Activated CD4-positive, alpha-beta T cell treated with anti-CD3 and anti-CD28 coated beads for 36 hours (primary cell): ENCODE measurements at regions of chr19 and their contacts with region 1.

Region 1: GRCh38 chr19:57240311-57241090 is at the start of gene ZNF805:
- DNase-seq: peak; percentile 97
- ATAC-seq: peak; percentile 95
- H3K4me3 Mint-ChIP-seq: peak within 1 kb of the TSS; percentile 80
- H3K27ac Mint-ChIP-seq: peak within 1 kb of the TSS; percentile 92
- H3K4me1 Mint-ChIP-seq: peaks cover 23% of the 10 kb centered on the region
- H3K27me3 Mint-ChIP-seq: no peaks in the 10 kb centered on the region
- total RNA-seq, gene ZNF805: 6.4 to 7.1 TPM

Region 2: DNA sequence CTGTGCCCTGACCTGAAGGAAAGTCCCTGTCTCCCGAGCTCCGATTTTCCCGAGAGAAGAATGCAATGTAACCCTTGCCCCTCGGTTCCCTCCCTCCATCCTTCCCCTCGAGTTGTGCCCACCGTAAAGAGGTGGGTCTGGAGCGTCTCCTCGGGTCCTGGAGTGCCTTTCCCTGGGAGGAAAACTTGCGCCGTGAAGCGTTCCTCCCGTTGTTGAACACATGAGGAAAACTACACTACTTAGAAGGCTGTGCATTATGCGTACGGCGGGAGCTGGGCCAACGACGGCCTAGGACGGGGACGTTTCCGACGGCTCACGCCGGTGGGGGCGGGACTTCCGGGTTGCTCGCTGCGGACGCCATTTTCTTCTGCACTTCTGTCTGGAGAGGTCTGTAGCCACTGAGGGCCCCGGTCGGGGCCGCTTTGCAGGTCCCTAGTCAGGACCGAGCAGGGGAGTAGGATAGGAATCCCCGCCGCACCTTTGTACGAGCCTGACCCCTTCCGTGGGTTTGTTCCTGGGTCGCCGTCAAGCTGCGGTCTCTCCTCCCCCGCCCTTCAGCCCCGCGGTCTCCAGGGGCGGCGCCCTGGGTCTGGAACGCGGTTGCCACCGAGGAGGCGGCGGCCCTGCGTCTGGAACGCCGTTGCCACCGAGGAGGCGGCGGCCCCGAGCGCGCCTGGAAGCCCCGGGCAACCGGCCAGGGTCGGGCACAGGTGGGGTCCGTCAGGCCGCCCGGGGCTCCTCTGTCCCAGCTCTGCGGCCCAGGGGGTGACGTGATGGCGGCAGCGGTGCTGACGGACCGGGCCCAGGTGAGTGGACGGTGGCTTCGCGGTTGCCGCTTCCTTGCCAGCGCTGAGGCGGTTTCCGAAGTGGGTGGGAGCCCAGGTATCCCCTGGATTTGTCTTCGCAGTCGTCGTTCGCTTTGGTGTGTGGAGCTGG is 49.1 kb before region 1 on chr19 and contains the start of gene ZNF264:
- CTCF ChIA-PET with region 1: no interaction called
- POLR2A ChIA-PET with region 1: no interaction called
- intact Hi-C with region 1: loop called in 1 of 2 experiments (anchors 1 kb)
- DNase-seq: peak; percentile 93
- ATAC-seq: peak; percentile 96
- H3K4me3 Mint-ChIP-seq: peak within 1 kb of the TSS; percentile 93
- H3K27ac Mint-ChIP-seq: peak within 1 kb of the TSS; percentile 95
- H3K4me1 Mint-ChIP-seq: peaks cover 28% of the 10 kb centered on the region
- H3K27me3 Mint-ChIP-seq: peaks cover 4% of the 10 kb centered on the region
- total RNA-seq, gene ZNF264: 14.8 to 21.1 TPM

Region 3: GRCh38 chr19:57320180-57321084 is 79.9 kb after region 1 on chr19 and contains the start of gene ZNF543:
- CTCF ChIA-PET with region 1: no interaction called
- POLR2A ChIA-PET with region 1: interaction called, 3 read pairs
- intact Hi-C with region 1: loop called (anchors 1 kb)
- DNase-seq: peak; percentile 97
- ATAC-seq: peak; percentile 98
- H3K4me3 Mint-ChIP-seq: peak within 1 kb of the TSS; percentile 94
- H3K27ac Mint-ChIP-seq: peak within 1 kb of the TSS; percentile 93
- H3K4me1 Mint-ChIP-seq: peaks cover 24% of the 10 kb centered on the region
- H3K27me3 Mint-ChIP-seq: peaks cover 22% of the 10 kb centered on the region
- total RNA-seq, gene ZNF543: 5.8 to 6.2 TPM

Region 4: GRCh38 chr19:57350877-57351805 is 110.6 kb after region 1 on chr19 and contains the start of gene ZNF304:
- CTCF ChIA-PET with region 1: no interaction called
- POLR2A ChIA-PET with region 1: no interaction called
- intact Hi-C with region 1: loop called (anchors 1 kb)
- DNase-seq: peak; percentile 94
- ATAC-seq: peak; percentile 100
- H3K4me3 Mint-ChIP-seq: peak within 1 kb of the TSS; percentile 96
- H3K27ac Mint-ChIP-seq: peak within 1 kb of the TSS; percentile 90
- H3K4me1 Mint-ChIP-seq: peaks cover 25% of the 10 kb centered on the region
- H3K27me3 Mint-ChIP-seq: peaks cover 4% of the 10 kb centered on the region
- total RNA-seq, gene ZNF304: 6.2 TPM

Region 5: GRCh38 chr19:57374179-57374578 is 133.7 kb after region 1 on chr19:
- CTCF ChIA-PET with region 1: no interaction called
- POLR2A ChIA-PET with region 1: no interaction called
- intact Hi-C with region 1: no loop called
- DNase-seq: no peak
- ATAC-seq: no peak
- H3K4me3 Mint-ChIP-seq: no peak overlapping the region
- H3K27ac Mint-ChIP-seq: no peak overlapping the region
- H3K4me1 Mint-ChIP-seq: no peaks in the 10 kb centered on the region
- H3K27me3 Mint-ChIP-seq: no peaks in the 10 kb centered on the region